IMR-90 (cell line): ENCODE measurements at regions of chr3 and their contacts with region 1.

Region 1: DNA sequence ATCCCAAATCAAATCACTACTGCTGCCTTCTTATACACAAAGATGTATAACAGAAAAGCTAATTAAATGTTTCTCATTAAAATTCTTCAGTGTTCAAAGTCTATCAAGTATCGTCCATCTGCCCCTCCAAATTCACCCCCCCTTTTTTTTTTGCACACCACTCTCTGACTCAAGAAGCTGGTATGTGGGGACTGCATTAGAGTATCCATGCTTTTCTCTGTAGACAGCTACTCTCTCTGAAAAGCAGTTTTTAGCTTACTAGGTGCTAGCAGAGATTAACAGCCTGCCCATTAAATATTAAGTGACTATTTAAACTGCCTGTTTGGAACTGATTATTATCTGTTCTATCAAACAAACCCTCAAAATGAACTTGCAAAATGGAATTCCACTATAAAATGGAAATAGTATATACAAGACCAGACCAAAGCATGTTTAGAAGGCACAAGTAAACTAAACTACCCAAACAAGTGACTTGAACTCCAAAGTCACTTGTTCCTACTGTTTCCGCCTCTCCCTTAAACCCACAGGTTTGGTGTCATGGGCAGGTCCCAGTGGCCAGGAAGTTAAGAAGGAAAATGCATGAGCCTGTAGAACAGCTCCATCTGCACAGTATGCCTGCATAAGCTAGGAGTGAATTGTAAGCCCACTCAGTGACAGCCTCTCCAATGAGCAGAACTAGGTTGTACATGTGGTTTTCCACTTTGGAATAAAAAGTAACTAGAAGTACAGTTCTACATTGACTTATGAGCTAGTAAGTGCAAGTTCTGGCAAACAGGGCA is 32.5 kb downstream of the GBE1 start:
- DNase-seq: peak; percentile 61
- ATAC-seq: peak; percentile 75
- H3K4me3 ChIP-seq: no peak overlapping the region
- H3K27ac ChIP-seq: peak overlapping the region; percentile 68
- H3K4me1 ChIP-seq: peaks cover 16% of the 10 kb centered on the region
- H3K27me3 ChIP-seq: no peaks in the 10 kb centered on the region
- CTCF ChIP-seq: no peak
- POLR2A ChIP-seq: no peak
- RAD21 ChIP-seq: no peak

Region 2: DNA sequence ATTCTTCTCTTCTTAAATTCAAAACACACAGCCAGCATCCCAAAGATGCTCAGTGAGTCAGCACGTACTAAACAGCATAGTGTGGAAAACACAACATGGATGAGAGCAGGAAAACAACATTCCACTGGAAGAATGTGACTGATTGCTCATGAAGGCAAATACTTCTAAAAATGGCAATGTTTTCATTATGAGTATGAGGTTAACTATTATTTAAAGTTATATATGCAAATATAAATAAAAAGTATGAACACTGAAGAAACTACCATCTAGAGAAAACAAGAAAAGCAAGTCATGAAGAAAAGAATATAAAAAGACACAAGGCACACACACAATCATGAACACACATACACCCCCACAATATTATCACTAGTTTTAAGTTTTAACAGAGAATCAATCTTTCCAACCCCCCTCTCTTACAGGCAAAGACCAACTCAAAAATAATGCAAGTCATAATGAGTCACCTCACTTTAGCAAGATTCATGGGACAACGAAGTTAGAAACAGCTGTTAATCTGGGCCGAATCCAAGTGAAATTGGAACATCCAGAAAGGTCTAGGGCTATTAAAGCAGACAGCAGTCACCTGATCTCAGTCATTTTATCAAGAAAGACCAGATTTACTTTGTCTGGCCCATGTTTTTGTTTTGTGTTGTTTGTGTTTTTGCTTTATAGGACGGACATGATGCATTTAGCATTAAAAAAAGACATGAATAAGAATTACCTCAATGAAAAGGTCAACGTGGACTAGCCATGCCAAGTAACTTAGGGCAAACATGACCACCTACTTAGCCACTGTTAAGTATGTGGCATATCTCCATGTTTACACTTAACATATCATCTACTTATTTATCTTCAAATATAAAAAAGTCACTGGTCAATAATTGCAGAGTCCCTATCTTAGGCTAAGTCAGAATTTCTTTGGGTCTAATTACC is 14.4 kb after region 1 on chr3:
- CTCF ChIA-PET with region 1: interaction called, 3 read pairs
- POLR2A ChIA-PET with region 1: no interaction called
- dilution Hi-C with region 1: no loop called
- in situ Hi-C with region 1: no loop called
- intact Hi-C with region 1: loop called (anchors 2 kb)
- DNase-seq: peak; percentile 98
- ATAC-seq: peak; percentile 80
- H3K4me3 ChIP-seq: no peak overlapping the region
- H3K27ac ChIP-seq: peak overlapping the region; percentile 58; the same call in 1 of the 2 replicates
- H3K4me1 ChIP-seq: peaks cover 17% of the 10 kb centered on the region
- H3K27me3 ChIP-seq: no peaks in the 10 kb centered on the region
- CTCF ChIP-seq: no peak
- POLR2A ChIP-seq: no peak
- RAD21 ChIP-seq: no peak

Region 3: DNA sequence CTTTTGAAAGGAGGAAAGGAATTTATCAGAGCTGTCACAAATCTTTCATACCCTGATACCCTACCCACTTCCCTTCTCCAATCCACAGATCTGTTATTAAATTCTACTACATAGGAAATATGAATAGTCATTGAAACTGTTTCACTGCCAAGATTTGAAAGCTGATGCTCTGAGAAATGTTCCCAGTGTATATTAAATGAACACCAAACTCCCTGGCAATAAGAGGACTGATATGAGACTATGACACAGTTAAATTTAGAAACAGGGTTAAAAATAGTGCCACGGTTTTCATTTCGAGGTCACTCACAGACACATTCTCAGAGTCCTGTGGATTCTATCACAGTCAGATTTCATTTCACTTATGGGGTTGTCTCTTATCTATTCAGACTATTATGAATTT is 59.7 kb after region 1 on chr3:
- CTCF ChIA-PET with region 1: no interaction called
- POLR2A ChIA-PET with region 1: no interaction called
- dilution Hi-C with region 1: no loop called
- in situ Hi-C with region 1: no loop called
- intact Hi-C with region 1: no loop called
- DNase-seq: no peak
- ATAC-seq: no peak
- H3K4me3 ChIP-seq: no peak overlapping the region
- H3K27ac ChIP-seq: no peak overlapping the region
- H3K4me1 ChIP-seq: no peaks in the 10 kb centered on the region
- H3K27me3 ChIP-seq: no peaks in the 10 kb centered on the region
- CTCF ChIP-seq: no peak
- POLR2A ChIP-seq: no peak
- RAD21 ChIP-seq: no peak

Region 4: GRCh38 chr3:81874738-81875137 is 145.8 kb after region 1 on chr3:
- CTCF ChIA-PET with region 1: no interaction called
- POLR2A ChIA-PET with region 1: no interaction called
- dilution Hi-C with region 1: no loop called
- in situ Hi-C with region 1: no loop called
- intact Hi-C with region 1: no loop called
- DNase-seq: no peak
- ATAC-seq: no peak
- H3K4me3 ChIP-seq: no peak overlapping the region
- H3K27ac ChIP-seq: no peak overlapping the region
- H3K4me1 ChIP-seq: no peaks in the 10 kb centered on the region
- H3K27me3 ChIP-seq: no peaks in the 10 kb centered on the region
- CTCF ChIP-seq: no peak
- POLR2A ChIP-seq: no peak
- RAD21 ChIP-seq: no peak